ENCODE measurements at regions of chr1 and their contacts with region 1.

Region 1: DNA sequence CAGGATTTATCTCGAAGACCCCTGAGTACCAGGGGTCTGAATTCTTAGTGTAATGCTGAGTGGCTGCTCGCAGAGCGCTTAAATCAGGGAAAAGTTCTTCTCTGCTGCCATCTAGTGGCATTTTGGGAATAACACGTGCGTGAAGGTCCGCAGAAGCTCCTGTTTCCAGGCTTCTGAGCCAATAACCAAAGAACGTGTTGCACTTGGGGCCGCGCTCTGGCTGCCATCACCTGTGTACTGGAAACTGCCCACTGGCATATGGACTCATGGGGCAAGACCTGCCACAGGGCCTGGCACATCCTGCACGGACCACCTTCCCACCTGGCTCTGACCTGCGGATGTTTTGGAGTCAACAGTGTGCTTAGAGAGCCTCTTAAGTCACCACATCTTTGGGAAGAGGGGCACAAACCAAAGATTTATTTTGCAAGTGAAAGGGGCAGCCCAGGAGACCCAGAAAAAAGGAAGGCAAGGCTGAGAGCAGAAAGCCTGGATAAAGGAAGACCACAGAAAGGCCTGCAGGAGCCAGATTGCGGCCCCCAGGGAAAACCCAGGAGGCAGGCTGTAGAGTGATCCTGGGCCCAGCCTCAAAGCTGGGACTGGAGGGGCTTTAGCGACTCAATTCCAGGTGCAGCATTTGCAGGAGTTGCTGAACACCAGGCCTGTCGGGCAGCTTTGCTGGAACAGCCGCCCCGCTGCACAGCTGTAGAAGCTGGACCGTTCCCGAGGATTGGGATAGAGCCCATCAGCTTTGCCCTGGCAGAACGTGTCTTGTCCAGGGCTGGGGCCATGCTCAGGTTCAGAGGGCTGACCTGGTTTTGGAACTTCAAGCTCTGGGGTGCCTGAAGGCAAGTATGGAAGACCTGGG is 13.0 kb downstream of the CHIT1 start:
- DNase-seq: peak; percentile 61 to 67 (median 62)
- ATAC-seq: peak; percentile 82
- H3K4me3 ChIP-seq: no peak overlapping the region
- H3K27ac ChIP-seq: no peak overlapping the region
- H3K4me1 ChIP-seq: peaks cover 5% of the 10 kb centered on the region
- H3K27me3 ChIP-seq: no peaks in the 10 kb centered on the region
- CTCF ChIP-seq: peak; percentile 39 to 83 (median 72)
- POLR2A ChIP-seq: no peak

Region 2: DNA sequence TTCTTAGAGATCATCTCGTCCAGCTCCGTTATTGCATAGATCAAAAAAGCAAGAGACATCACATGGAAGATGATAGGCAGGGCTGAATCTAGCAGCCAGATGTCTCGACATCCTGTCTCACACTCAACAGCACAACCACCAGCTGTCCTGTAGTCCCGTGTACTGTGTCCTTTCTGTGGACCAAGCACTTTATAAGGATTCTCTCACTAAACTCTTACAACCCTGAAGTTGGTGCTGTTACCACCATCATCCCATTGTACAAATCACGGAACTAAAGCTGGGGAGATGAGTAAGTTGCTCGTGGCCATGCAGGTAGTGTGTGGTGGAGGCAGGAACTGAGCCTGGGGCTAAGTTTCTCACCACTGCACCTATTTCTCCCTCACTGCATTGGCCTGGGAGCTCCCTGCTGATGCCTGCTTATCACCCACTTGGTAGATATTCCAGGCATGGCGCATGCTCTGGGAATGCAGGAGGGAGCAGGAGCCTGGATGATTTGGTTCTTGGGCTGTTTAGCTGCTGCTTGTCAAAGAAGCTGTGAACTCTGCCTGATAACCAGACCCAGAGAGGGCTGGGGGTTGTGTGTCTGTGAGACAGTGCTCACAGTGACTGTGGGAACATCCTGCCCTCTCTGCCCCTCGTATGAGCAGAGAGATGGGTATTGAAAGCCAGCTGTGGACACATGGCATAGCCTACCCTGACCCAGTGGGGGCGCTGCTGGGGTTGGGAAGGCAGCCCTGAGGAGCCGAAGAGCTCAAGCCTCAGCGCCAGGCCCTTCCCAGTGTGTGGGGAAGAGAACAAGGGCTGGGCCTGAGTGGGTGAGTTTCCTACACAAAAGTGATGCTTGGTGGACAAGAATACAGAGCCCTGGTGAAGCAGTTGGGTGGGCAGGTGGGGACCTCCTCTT is 176.6 kb before region 1 on chr1:
- intact Hi-C with region 1: loop called (anchors 10 kb)
- DNase-seq: no peak
- ATAC-seq: no peak
- H3K4me3 ChIP-seq: no peak overlapping the region
- H3K27ac ChIP-seq: no peak overlapping the region
- H3K4me1 ChIP-seq: no peaks in the 10 kb centered on the region
- H3K27me3 ChIP-seq: no peaks in the 10 kb centered on the region
- CTCF ChIP-seq: no peak
- POLR2A ChIP-seq: no peak

Region 3: GRCh38 chr1:203104789-203105390 is 111.6 kb before region 1 on chr1:
- intact Hi-C with region 1: no loop called
- DNase-seq: no peak
- ATAC-seq: no peak
- H3K4me3 ChIP-seq: no peak overlapping the region
- H3K27ac ChIP-seq: no peak overlapping the region
- H3K4me1 ChIP-seq: no peaks in the 10 kb centered on the region
- H3K27me3 ChIP-seq: no peaks in the 10 kb centered on the region
- CTCF ChIP-seq: no peak
- POLR2A ChIP-seq: no peak

Region 4: DNA sequence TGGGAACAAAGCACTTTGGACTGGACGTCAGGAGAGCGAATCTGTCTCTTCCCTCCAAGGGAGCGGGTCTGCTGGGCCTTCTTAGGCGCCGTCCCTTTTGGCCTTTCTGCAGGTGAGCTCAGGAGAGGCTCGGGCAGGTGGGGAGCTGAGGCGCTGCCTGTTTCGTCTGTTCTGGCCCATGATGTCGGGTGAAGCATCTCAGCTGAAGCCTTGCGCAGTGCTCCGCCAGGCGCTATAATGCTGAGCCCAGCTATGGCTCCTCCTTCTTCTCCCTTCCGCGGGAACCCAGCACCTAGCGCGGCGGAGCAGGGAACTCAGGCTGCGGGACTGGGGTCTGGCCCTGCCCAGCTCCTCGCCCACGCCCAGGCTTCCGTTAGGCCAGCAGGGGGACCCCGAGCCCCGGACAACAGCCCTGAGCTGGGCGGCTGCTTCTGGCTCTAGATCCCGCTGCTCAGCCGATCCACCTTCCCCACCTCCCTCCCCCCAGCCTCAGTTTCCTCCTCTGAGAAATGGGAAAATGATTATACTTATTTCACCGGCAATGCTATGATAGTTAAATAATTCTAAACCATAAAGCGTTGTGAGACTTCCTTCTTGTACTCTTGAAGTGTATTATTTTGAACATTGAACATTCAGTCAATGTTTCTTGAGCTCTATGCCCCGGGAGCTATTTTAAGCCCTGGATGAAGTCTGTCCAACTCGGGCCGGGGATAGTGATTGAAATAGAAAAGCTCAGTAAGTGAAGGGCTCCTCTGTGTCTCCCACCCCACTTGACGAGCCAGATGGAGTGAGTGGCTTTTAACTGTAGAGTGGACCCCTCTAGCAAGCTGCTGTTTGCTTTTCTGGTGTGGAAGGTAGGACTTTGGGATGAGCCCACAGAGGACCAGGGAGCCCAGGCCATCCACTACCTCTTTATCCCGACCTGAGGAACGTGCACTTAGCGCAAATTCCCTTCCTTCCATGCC is 98.6 kb before region 1 on chr1:
- intact Hi-C with region 1: loop called (anchors 2 kb)
- DNase-seq: peak; percentile 75 to 82 (median 78)
- ATAC-seq: peak; percentile 92
- H3K4me3 ChIP-seq: no peak overlapping the region
- H3K27ac ChIP-seq: no peak overlapping the region
- H3K4me1 ChIP-seq: peaks cover 7% of the 10 kb centered on the region
- H3K27me3 ChIP-seq: no peaks in the 10 kb centered on the region
- CTCF ChIP-seq: peak; percentile 77 to 92 (median 86)
- POLR2A ChIP-seq: no peak

Measured in body of pancreas (tissue), 4 donors.